Left ventricle myocardium inferior (tissue), 1 donor: ENCODE measurements at regions of chr12 and their contacts with region 1.

Region 1: DNA sequence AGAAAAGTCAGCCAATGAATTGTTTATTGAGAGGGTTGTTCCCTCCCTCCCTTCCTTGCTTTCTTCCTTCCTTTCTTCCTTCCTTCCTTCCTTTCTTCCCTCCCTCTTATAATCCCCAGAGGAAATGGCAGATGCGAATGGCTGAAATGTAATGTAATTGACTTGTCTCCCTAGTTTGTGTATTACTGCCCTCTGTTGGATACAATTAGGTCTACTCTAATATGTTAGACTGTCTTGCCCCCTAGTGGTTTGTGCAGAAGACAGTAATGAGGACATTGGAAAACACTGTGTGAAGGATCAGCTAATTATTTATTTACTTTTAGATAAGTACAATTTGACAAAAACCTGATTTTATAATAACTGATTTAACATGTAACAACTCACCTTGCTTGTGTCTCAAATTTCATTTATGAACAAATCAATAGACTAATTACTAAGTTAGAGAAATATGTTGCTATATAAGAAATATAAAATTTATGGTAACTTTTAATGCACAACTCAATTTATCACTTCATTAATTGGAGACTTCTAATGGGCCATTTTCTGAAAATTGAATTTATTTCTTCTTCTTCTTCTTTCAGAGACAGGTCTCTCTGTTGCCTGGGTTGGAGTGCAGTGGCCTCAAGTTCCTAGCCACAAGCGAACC is 229.8 kb upstream of the LRIG3 start:
- DNase-seq: no peak
- H3K4me3 ChIP-seq: no peak overlapping the region
- H3K27ac ChIP-seq: no peak overlapping the region
- H3K4me1 ChIP-seq: no peaks in the 10 kb centered on the region
- H3K27me3 ChIP-seq: no peaks in the 10 kb centered on the region
- CTCF ChIP-seq: peak; percentile 97

Region 2: GRCh38 chr12:57993025-57993424 is 1157.1 kb before region 1 on chr12:
- intact Hi-C with region 1: loop called (anchors 10 kb)
- DNase-seq: no peak
- H3K4me3 ChIP-seq: no peak overlapping the region
- H3K27ac ChIP-seq: no peak overlapping the region
- H3K4me1 ChIP-seq: no peaks in the 10 kb centered on the region
- H3K27me3 ChIP-seq: no peaks in the 10 kb centered on the region
- CTCF ChIP-seq: no peak

Region 3: DNA sequence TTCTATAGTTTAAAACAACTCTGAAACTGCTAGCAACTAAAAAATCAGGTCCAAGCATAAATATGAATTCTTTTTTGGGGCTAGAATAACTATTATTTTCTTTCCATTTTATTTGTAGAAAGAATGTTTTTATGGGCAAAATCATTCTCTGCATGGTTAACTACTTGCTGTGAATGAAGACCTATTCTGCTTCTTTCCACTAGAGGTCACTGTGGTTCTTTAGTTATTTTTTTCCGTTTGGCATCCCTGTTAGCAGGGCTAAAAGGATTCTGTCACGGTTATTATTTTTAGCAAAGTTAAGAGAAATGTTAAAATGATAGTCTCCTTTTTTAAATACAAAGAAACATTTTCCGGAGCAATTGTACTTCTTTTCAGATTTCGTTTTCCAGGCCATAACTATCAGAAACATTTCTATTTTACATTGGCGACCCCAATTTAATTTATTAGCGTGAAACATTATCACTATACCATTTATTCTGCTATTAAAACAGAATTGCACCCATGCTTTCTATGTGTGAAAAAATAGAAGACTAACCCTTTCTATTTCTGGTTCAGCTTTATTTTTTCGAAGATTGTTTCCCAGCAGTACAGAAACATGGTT is 804.0 kb before region 1 on chr12:
- intact Hi-C with region 1: loop called (anchors 5 kb)
- DNase-seq: no peak
- H3K4me3 ChIP-seq: no peak overlapping the region
- H3K27ac ChIP-seq: no peak overlapping the region
- H3K4me1 ChIP-seq: no peaks in the 10 kb centered on the region
- H3K27me3 ChIP-seq: no peaks in the 10 kb centered on the region
- CTCF ChIP-seq: peak; percentile 91

Region 4: GRCh38 chr12:59383056-59383822 is 233.1 kb after region 1 on chr12:
- intact Hi-C with region 1: no loop called
- DNase-seq: no peak
- H3K4me3 ChIP-seq: no peak overlapping the region
- H3K27ac ChIP-seq: no peak overlapping the region
- H3K4me1 ChIP-seq: no peaks in the 10 kb centered on the region
- H3K27me3 ChIP-seq: no peaks in the 10 kb centered on the region
- CTCF ChIP-seq: no peak